ENCODE measurements at regions of chr2 and their contacts with region 1.

Region 1: DNA sequence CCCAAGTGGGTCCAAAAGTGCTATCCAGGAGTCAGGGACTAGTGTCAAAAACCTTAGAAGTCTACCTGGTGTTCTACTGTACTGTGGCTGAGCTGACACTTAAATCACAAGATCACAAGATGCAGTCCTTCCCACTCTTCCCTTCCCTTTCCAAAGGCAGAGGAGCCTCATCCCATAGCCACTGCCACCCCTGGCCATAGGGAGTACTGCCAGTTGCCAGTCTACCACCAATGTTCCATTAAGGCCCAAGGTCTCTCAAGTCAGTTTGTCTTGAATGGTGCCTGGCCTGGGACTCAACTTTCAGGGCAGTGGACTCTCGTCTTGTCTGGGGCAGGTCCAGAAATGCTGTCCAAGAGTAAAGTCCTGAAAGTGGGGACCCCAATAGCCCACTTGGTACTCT is 585.6 kb downstream of the NUP35 start:
- DNase-seq: no peak
- H3K4me3 ChIP-seq: no peak overlapping the region
- H3K27ac ChIP-seq: no peak overlapping the region
- H3K4me1 ChIP-seq: no peaks in the 10 kb centered on the region
- CTCF ChIP-seq: no peak

Region 2: DNA sequence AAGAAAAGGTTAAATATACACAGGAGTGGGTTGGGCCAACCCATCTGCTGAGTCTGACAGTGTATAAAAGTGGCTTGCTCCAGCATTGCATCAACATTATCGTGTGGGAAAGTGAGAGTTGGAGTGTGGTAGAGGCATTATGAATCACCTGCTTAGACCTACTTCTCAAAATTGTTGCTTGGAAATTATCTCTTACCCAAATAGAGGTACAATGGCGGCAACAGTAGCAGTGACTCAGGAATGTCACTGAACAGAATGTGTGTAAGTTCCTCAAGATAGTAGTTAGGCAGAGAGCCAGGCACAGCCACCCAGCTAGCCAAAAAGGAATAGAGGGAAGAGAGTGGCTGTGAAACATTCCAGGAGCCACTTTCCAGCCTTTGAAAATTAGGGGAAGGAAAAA is 30.4 kb after region 1 on chr2:
- CTCF ChIA-PET with region 1: no interaction called
- POLR2A ChIA-PET with region 1: no interaction called
- intact Hi-C with region 1: loop called (anchors 5 kb)
- DNase-seq: no peak
- H3K4me3 ChIP-seq: no peak overlapping the region
- H3K27ac ChIP-seq: no peak overlapping the region
- H3K4me1 ChIP-seq: no peaks in the 10 kb centered on the region
- CTCF ChIP-seq: no peak